ENCODE measurements at regions of chr3 and their contacts with region 1.

Region 1: GRCh38 chr3:52278510-52279069 is at the start of gene WDR82:
- DNase-seq: peak; percentile 99
- H3K4me3 ChIP-seq: peak within 1 kb of the TSS; percentile 79 to 92 (median 84)
- H3K27ac ChIP-seq: peak within 1 kb of the TSS; percentile 94 to 98 (median 97)
- H3K4me1 ChIP-seq: peaks cover 48 to 55% (median 51%) of the 10 kb centered on the region in 4 donors
- H3K27me3 ChIP-seq: no peaks in the 10 kb centered on the region
- CTCF ChIP-seq: peak; percentile 60 to 63 (median 62)
- EP300 ChIP-seq: no peak
- POLR2A ChIP-seq: peak; percentile 53
- total RNA-seq, gene WDR82: 62.6 to 101 (median 80.9) TPM

Region 2: DNA sequence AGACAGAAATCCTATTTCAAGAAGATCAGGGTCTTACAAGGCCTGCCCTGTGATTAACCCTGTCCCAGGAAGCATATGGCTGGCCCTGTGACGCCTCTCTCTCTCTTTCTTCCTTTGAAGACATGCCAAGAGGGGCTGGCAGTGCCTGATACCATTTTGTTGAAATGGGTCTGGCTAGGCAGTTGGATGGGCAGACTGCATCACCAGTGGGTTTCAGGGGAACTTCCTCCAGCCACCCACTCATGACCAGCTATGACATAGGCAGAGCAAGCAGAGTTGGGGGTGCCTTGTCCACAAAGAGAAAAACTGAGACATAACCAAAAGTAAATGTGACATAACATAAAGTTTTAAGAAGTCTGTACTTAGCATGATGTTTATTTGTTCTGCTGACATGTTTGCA is 924.9 kb before region 1 on chr3:
- intact Hi-C with region 1: no loop called
- DNase-seq: no peak
- H3K4me3 ChIP-seq: no peak overlapping the region
- H3K27ac ChIP-seq: no peak overlapping the region
- H3K4me1 ChIP-seq: no peaks in the 10 kb centered on the region
- H3K27me3 ChIP-seq: no peaks in the 10 kb centered on the region
- CTCF ChIP-seq: no peak
- EP300 ChIP-seq: no peak
- POLR2A ChIP-seq: no peak

Region 3: DNA sequence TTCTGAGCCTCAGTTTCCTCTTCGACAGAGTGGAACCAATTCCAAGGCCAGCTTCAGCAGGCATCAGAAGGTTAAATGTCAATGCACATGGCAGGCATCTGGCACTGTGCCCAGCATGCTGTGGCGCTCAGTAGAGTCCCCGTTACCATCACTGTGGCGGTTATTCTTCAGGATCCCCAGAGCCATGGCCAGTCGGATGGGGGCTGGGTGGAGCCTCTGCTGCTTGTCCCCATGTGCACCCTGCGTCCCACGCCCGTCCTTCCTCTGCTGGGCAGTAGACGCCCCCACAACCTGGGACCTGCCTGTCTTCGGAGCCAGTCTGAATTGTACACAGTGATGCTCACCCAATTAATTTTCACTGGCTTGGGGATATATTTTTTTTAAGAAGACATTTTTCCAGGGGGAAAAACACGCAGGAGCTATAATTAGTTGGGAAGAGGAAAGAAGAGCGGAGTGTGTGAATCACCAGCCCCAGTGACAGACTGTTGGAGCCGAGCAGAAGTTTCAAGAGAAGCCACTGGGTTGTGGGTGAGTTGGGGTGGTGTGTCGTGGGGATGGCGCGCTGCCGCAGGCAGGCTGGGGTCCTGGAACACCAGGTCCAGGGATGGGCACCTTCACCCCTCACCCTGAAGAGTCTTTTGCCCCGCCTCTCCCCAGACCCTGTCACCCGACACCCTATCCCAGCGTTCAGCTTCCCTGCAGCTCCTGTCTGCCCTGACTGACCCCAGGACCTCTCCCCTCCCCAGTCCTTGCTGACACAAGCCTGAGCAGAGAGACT is 256.1 kb before region 1 on chr3:
- intact Hi-C with region 1: no loop called
- DNase-seq: no peak
- H3K4me3 ChIP-seq: peak overlapping the region; percentile 8 to 22 (median 19)
- H3K27ac ChIP-seq: peak overlapping the region; percentile 59 to 71 (median 66)
- H3K4me1 ChIP-seq: peaks cover 73 to 81% (median 77%) of the 10 kb centered on the region in 4 donors
- H3K27me3 ChIP-seq: no peaks in the 10 kb centered on the region
- CTCF ChIP-seq: no peak
- EP300 ChIP-seq: no peak
- POLR2A ChIP-seq: no peak

Region 4: GRCh38 chr3:52154117-52155094 is 124.2 kb before region 1 on chr3 and contains the start of gene POC1A:
- intact Hi-C with region 1: no loop called
- DNase-seq: peak; percentile 100
- H3K4me3 ChIP-seq: peak within 1 kb of the TSS; percentile 54 to 65 (median 60)
- H3K27ac ChIP-seq: peak within 1 kb of the TSS; percentile 84 to 90 (median 85)
- H3K4me1 ChIP-seq: peaks cover 13 to 19% (median 17%) of the 10 kb centered on the region in 4 donors
- H3K27me3 ChIP-seq: no peaks in the 10 kb centered on the region
- CTCF ChIP-seq: peak; percentile 7 to 32 (median 13)
- EP300 ChIP-seq: peak; percentile 67
- POLR2A ChIP-seq: no peak
- total RNA-seq, gene POC1A: 0.71 to 2.1 (median 1.2) TPM

Region 5: GRCh38 chr3:52238761-52239701 is 39.6 kb before region 1 on chr3 and contains the start of gene TWF2:
- intact Hi-C with region 1: loop called (anchors 2 kb)
- DNase-seq: no peak
- H3K4me3 ChIP-seq: peak within 1 kb of the TSS; percentile 75 to 96 (median 85)
- H3K27ac ChIP-seq: peak within 1 kb of the TSS; percentile 89 to 94 (median 91)
- H3K4me1 ChIP-seq: peaks cover 37 to 66% (median 62%) of the 10 kb centered on the region in 4 donors
- H3K27me3 ChIP-seq: no peaks in the 10 kb centered on the region
- CTCF ChIP-seq: peak; percentile 42 to 55 (median 43)
- EP300 ChIP-seq: no peak
- POLR2A ChIP-seq: peak; percentile 36
- total RNA-seq, gene TWF2: 66.4 to 89.5 (median 79.9) TPM